ENCODE measurements at regions of chr15 and their contacts with region 1.

Region 1: GRCh38 chr15:33234014-33234461 is 39.5 kb upstream of the FMN1 start:
- DNase-seq: no peak
- H3K4me3 ChIP-seq: no peak overlapping the region
- H3K27ac ChIP-seq: no peak overlapping the region
- H3K4me1 ChIP-seq: no peaks in the 10 kb centered on the region
- H3K27me3 ChIP-seq: no peaks in the 10 kb centered on the region
- CTCF ChIP-seq: peak; percentile 12

Region 2: DNA sequence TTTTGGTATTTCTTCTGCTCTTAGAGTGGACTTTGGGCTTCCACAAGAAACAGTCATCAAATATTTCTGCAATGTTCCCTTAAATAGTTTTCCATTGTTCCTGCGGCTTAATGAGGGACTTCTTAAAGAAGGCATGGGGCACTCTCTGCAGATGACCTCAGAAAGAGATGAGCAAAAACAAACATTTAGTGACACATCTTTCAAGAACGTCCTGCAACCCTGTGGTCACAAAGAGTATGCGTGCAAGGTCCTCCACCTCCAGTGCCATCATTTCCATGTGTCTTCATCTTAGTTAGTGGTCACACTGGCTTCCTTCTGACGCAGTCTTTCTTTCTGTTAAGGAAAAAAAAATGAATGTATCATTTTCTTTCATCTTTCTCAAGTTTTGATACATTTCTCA is 460.0 kb before region 1 on chr15:
- intact Hi-C with region 1: no loop called
- DNase-seq: no peak
- H3K4me3 ChIP-seq: no peak overlapping the region
- H3K27ac ChIP-seq: no peak overlapping the region
- H3K4me1 ChIP-seq: no peaks in the 10 kb centered on the region
- H3K27me3 ChIP-seq: no peaks in the 10 kb centered on the region
- CTCF ChIP-seq: no peak

Region 3: GRCh38 chr15:33086507-33087121 is 147.4 kb before region 1 on chr15:
- intact Hi-C with region 1: loop called (anchors 10 kb)
- DNase-seq: no peak
- H3K4me3 ChIP-seq: no peak overlapping the region
- H3K27ac ChIP-seq: no peak overlapping the region
- H3K4me1 ChIP-seq: no peaks in the 10 kb centered on the region
- H3K27me3 ChIP-seq: no peaks in the 10 kb centered on the region
- CTCF ChIP-seq: peak; percentile 33

Measured in colonic mucosa (tissue), 4 donors.